Caco-2 (cell line): ENCODE measurements at regions of chr18 and their contacts with region 1.

Region 1: DNA sequence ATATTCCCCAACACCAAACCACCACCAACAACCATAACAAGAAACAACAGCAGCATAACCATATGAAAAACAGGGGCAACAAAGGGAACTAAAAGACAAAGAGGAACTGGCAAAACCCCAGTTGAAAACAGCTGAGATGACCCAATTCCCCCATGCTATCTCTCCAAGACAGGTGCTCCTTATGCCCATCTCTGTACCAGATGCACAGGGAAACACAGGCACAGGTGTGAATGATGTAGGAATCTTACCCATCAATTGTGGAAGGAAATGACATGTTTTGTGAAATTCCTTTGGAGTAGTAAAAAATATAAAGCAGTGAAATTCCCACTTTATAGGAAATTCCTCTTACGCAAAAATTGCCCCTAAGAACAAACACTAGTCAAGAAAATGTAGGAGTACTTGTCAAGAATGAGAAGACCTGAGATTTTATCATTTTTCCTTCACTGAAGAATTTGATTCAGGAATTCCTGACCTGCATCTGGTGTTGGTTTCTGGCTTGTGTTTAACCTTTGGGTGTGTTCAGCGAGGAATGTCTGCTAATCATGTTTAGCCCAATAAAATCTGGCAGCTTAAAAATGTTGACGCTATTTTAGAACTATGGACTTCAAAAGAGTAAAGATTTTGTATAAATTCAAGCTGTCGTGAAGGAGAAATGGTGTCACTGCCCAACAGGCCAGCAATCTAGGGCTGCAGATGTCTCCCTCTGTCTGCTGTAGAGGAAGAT is 67.7 kb upstream of the ARHGAP28 start:
- DNase-seq: peak; percentile 77 to 79
- H3K4me3 ChIP-seq: no peak overlapping the region
- H3K4me3 Mint-ChIP-seq: peak overlapping the region; percentile 13
- H3K27ac Mint-ChIP-seq: peak overlapping the region; percentile 91
- H3K4me1 ChIP-seq: peaks cover 39% of the 10 kb centered on the region
- H3K4me1 Mint-ChIP-seq: peaks cover 32% of the 10 kb centered on the region
- H3K27me3 ChIP-seq: no peaks in the 10 kb centered on the region
- H3K27me3 Mint-ChIP-seq: no peaks in the 10 kb centered on the region
- CTCF ChIP-seq: peak in 1 of 2 experiments; percentile 13

Region 2: DNA sequence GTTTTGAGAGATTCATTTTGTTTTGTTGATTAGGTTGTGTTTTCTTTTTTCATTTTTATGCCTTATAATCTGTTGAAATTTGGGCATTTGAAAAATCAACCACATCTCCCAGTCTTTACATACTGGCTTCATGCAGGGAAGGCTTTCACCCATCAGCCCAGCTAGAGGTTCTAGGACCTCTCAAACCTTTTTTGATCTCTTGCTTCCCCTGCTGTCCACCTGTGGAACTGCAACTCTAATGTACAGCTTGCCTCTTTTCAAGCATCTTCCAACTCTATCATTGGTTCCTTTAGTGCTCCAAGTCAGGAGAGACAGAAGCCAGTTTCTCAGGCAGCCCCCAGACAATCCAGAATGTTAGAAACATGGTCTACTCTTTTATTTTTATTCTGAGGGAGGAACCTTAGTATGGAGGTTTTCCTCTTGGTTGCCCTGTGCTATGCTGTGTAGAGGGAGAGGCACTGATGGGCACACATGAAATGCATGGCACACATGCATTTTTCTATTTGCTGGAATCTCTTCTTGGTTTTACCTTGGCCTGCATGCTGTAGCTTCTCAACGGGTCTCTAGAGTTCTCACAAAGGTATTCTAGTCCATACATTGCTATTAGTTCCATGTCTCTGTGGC is 139.9 kb before region 1 on chr18:
- CTCF ChIA-PET with region 1: no interaction called
- POLR2A ChIA-PET with region 1: no interaction called
- intact Hi-C with region 1: no loop called
- DNase-seq: peak; percentile 45 to 71
- H3K4me3 ChIP-seq: no peak overlapping the region
- H3K4me3 Mint-ChIP-seq: no peak overlapping the region
- H3K27ac Mint-ChIP-seq: no peak overlapping the region
- H3K4me1 ChIP-seq: no peaks in the 10 kb centered on the region
- H3K4me1 Mint-ChIP-seq: no peaks in the 10 kb centered on the region
- H3K27me3 ChIP-seq: no peaks in the 10 kb centered on the region
- H3K27me3 Mint-ChIP-seq: peaks cover 6% of the 10 kb centered on the region
- CTCF ChIP-seq: peak; percentile 80 to 82

Region 3: GRCh38 chr18:6543330-6543908 is 118.4 kb before region 1 on chr18:
- CTCF ChIA-PET with region 1: interaction called, 4 read pairs
- POLR2A ChIA-PET with region 1: no interaction called
- intact Hi-C with region 1: loop called (anchors 1 kb)
- DNase-seq: peak in 1 of 2 experiments; percentile 35
- H3K4me3 ChIP-seq: no peak overlapping the region
- H3K4me3 Mint-ChIP-seq: no peak overlapping the region
- H3K27ac Mint-ChIP-seq: no peak overlapping the region
- H3K4me1 ChIP-seq: peaks cover 7% of the 10 kb centered on the region
- H3K4me1 Mint-ChIP-seq: peaks cover 7% of the 10 kb centered on the region
- H3K27me3 ChIP-seq: no peaks in the 10 kb centered on the region
- H3K27me3 Mint-ChIP-seq: no peaks in the 10 kb centered on the region
- CTCF ChIP-seq: peak; percentile 64 to 65

Region 4: DNA sequence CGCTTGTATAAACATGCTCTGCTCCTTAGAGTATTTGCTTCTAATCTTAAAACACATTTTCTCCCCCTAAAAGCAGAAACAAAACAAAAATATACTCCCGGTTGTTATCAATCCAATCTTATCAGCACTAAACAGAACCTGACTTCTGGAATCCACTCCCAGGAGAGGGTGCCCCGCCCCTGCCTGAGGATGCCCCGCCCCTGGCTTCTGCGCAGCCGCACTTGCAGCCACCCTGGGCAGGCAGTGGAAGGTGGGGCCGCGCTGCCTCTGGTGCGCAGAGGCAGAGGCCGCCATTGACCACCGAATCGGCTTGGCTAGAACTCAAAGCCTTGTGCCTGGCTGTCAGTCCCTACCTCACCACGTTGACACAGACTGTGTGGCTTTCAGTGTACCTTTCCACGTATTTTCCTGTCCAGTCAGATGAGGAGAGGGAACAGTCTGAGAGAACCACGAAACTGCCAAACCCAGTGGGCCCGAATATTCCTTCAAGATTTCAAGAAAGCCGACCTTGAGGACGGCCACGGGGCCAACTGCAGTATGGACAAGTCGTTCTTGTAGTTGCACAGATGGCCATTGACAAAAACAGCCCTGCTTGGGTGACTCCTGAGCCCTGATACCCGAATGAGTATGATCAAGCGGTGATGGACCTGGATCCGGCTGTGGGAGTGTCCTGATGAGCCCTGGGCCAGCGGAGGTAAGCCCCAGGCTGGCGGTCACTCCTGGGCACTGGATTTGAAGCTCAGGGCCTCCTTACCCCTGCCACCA is 21.4 kb after region 1 on chr18:
- CTCF ChIA-PET with region 1: no interaction called
- POLR2A ChIA-PET with region 1: no interaction called
- intact Hi-C with region 1: loop called (anchors 1 kb)
- DNase-seq: peak; percentile 85 to 91
- H3K4me3 ChIP-seq: no peak overlapping the region; the same call in 1 of the 2 replicates
- H3K4me3 Mint-ChIP-seq: peak overlapping the region; percentile 78
- H3K27ac Mint-ChIP-seq: peak overlapping the region; percentile 86
- H3K4me1 ChIP-seq: peaks cover 25% of the 10 kb centered on the region
- H3K4me1 Mint-ChIP-seq: peaks cover 11% of the 10 kb centered on the region
- H3K27me3 ChIP-seq: no peaks in the 10 kb centered on the region
- H3K27me3 Mint-ChIP-seq: no peaks in the 10 kb centered on the region
- CTCF ChIP-seq: no peak

Region 5: DNA sequence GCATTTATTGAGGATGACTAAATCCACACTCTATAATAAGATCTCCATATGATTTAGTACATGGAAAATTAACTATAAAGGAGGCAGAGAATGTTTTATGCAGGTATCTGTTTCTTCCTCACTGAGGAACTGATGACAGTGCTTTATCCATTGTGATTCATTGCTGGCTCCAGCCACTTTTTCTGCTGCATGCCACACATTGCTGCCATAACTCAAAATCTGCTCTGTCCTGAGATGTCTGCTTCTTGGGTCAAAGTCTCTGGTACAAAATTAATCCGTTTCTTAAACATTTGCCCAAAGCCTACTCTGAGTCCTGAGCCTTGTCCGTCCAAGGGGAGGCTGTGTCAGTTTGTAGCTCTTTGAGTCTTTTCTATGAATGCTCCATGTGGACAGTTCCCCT is 52.2 kb after region 1 on chr18:
- CTCF ChIA-PET with region 1: no interaction called
- POLR2A ChIA-PET with region 1: no interaction called
- intact Hi-C with region 1: loop called (anchors 1 kb)
- DNase-seq: peak; percentile 72 to 75
- H3K4me3 ChIP-seq: no peak overlapping the region
- H3K4me3 Mint-ChIP-seq: peak overlapping the region; percentile 56
- H3K27ac Mint-ChIP-seq: peak overlapping the region; percentile 93
- H3K4me1 ChIP-seq: peaks cover 76% of the 10 kb centered on the region
- H3K4me1 Mint-ChIP-seq: peaks cover 55% of the 10 kb centered on the region
- H3K27me3 ChIP-seq: no peaks in the 10 kb centered on the region
- H3K27me3 Mint-ChIP-seq: no peaks in the 10 kb centered on the region
- CTCF ChIP-seq: no peak

Region 6: DNA sequence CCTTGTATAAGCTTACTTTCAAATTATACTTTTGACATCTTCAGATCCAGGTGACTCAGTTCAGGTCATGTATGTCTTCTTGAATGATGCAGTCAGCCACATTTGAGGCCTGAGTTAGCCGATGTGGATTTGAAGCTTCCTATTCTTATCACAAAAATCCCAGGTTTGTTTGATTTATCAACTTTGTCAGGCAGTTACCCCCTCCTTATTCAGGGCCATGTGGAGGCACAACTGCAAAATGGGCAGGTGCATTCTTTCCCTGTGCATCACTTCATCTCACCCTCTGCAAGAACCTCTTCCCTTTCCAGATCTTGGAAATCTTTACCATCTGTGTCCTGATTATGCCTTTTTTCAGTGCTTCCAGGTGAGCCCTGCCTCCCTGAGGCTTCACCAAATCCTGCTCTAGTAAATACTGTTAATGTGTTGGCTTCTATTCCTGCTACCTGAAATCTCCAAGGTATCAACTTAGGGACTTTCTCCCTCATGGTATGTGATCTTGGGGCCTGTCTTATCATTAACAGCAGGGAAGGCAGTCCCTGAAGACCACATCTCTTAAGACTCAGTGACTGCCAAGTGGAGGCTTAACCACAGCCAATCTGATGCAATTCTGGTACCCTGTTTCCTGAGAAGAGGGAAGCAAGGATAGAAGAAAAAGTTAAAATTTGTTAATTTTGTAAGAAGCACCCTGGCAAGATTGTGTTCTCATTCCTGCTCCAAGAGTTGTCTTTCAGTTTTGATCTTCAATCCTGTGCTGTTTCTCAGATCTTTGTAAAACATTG is 58.2 kb after region 1 on chr18:
- CTCF ChIA-PET with region 1: no interaction called
- POLR2A ChIA-PET with region 1: no interaction called
- intact Hi-C with region 1: loop called (anchors 1 kb)
- DNase-seq: peak; percentile 56 to 57
- H3K4me3 ChIP-seq: no peak overlapping the region
- H3K4me3 Mint-ChIP-seq: peak overlapping the region; percentile 60
- H3K27ac Mint-ChIP-seq: peak overlapping the region; percentile 99
- H3K4me1 ChIP-seq: peaks cover 96% of the 10 kb centered on the region
- H3K4me1 Mint-ChIP-seq: peaks cover 65% of the 10 kb centered on the region
- H3K27me3 ChIP-seq: no peaks in the 10 kb centered on the region
- H3K27me3 Mint-ChIP-seq: no peaks in the 10 kb centered on the region
- CTCF ChIP-seq: no peak

Region 7: DNA sequence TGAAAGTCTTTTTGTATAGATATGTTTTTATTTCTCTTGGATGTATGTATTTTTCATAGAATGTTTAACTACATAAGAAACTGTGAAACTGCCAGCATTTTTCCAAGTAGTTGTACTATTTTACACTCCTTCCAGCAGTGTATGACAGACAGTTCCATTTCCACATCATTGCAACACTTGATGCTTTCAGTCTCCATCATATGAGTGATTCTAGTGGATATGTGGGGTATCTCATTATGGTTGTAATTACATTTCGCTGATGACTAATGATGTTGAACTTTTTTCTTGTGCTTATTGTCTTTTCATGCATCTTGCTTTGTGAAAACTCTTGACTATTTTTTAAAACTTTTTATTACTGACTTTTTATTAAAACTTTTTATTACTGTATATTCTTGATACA is 169.1 kb after region 1 on chr18:
- CTCF ChIA-PET with region 1: no interaction called
- POLR2A ChIA-PET with region 1: no interaction called
- intact Hi-C with region 1: no loop called
- DNase-seq: no peak
- H3K4me3 ChIP-seq: no peak overlapping the region
- H3K4me3 Mint-ChIP-seq: no peak overlapping the region
- H3K27ac Mint-ChIP-seq: no peak overlapping the region
- H3K4me1 ChIP-seq: peaks cover 10% of the 10 kb centered on the region; the same call in 1 of the 2 replicates
- H3K4me1 Mint-ChIP-seq: peaks cover 21% of the 10 kb centered on the region
- H3K27me3 ChIP-seq: no peaks in the 10 kb centered on the region
- H3K27me3 Mint-ChIP-seq: no peaks in the 10 kb centered on the region
- CTCF ChIP-seq: no peak

Region 8: GRCh38 chr18:6885992-6886796 is 224.3 kb after region 1 on chr18:
- CTCF ChIA-PET with region 1: no interaction called
- POLR2A ChIA-PET with region 1: no interaction called
- intact Hi-C with region 1: loop called (anchors 1 kb)
- DNase-seq: peak in 1 of 2 experiments; percentile 68
- H3K4me3 ChIP-seq: no peak overlapping the region
- H3K4me3 Mint-ChIP-seq: no peak overlapping the region
- H3K27ac Mint-ChIP-seq: no peak overlapping the region
- H3K4me1 ChIP-seq: no peaks in the 10 kb centered on the region
- H3K4me1 Mint-ChIP-seq: no peaks in the 10 kb centered on the region
- H3K27me3 ChIP-seq: no peaks in the 10 kb centered on the region
- H3K27me3 Mint-ChIP-seq: no peaks in the 10 kb centered on the region
- CTCF ChIP-seq: peak; percentile 67 to 78